CD8-positive, alpha-beta memory T cell (primary cell): ENCODE measurements at regions of chr7 and their contacts with region 1.

Region 1: DNA sequence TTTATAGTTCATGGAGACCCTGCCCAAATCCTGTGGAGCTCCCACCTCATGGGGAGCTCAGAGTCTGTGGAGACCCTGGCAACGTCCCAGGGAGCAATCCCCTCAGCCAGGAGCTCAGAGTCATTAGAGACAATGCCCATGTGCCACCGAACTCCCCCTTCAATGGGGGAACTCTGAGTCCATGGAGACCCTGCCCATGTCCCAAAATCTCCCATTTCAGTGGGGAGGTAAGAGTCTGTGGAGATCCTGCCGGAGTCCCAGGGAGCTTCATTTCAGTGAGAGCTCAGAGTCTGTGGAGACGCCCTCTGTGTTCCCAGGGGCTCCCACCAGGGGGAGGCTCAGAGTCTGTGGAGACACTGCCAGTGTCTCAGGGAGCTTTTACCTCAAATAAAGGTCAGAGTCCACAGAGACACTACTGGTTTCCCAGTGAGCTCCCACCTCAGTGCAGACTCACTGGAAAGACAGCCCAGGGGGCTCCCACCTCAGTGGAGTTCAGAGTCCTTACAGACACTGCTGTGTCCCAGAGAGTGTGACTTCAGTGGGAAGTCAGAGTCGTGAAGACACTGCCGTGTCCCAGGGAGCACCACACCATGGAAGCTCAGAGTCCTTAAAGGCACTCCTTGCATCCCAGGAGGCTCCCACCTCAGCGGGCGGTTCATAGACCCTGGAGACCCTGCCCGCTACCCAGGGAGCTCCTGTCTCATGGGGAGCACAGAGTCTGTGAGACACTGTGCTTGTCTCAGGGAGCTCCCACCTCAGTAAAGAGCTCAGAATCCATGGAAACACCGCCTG is 5.0 kb downstream of the MYO1G start:
- DNase-seq: peak; percentile 40 to 76 (median 41)
- H3K4me3 ChIP-seq: no peak overlapping the region
- H3K4me3 Mint-ChIP-seq: peak overlapping the region in 2 of 7 donors; percentile 50 to 56
- H3K27ac ChIP-seq: peak overlapping the region; percentile 1
- H3K27ac Mint-ChIP-seq: peak overlapping the region; percentile 29 to 96 (median 63)
- H3K4me1 ChIP-seq: peaks cover 54% of the 10 kb centered on the region
- H3K4me1 Mint-ChIP-seq: peaks cover 28 to 64% (median 30%) of the 10 kb centered on the region in 3 donors
- H3K27me3 ChIP-seq: no peaks in the 10 kb centered on the region
- H3K27me3 Mint-ChIP-seq: no peaks in the 10 kb centered on the region

Region 2: DNA sequence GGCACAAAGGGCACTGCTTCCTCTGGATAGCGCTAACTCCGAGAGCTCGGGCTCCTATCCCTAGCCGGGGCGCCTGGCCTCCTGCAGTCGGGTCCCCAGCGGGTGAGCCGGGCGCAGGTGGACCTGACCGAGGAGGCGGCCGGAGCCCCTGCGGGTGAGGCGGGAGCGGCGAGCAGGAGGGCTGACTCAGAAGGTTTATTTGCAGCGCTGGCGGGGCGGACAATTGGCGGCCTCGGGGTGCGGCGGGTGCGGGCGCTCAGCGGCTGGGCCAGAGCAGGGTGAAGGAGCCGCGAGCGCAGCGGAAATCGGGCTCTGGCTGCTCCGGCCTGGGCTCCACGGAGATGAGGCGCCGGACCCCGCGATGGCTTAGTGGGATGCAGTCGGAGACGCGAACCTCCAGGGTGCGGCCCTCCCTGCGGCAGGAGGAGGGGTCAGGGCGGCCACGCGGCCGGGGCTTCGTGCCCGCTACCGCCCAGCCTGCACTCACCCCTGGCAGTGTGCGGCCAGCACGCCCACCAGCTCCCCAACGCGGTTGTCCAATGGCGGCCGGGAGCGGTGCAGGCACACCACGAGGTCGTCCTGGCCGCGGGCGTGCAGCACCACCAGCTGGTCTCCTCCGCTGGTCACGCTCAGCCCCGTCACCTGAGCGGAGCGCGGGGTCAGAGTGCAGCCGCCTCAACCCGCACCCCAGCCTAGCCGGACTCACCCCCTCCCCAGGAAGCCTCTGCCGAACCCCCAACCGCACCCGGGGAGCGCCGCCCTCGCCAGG is 11.1 kb before region 1 on chr7:
- CTCF ChIA-PET with region 1: interaction called, 18 read pairs
- POLR2A ChIA-PET with region 1: interaction called, 5 read pairs
- DNase-seq: no peak
- H3K4me3 ChIP-seq: no peak overlapping the region
- H3K4me3 Mint-ChIP-seq: no peak overlapping the region
- H3K27ac ChIP-seq: no peak overlapping the region
- H3K27ac Mint-ChIP-seq: no peak overlapping the region
- H3K4me1 ChIP-seq: peaks cover 11% of the 10 kb centered on the region
- H3K4me1 Mint-ChIP-seq: peaks cover 14 to 25% (median 20%) of the 10 kb centered on the region in 3 donors
- H3K27me3 ChIP-seq: no peaks in the 10 kb centered on the region
- H3K27me3 Mint-ChIP-seq: peaks cover 0 to 2% of the 10 kb centered on the region in 2 donors

Region 3: DNA sequence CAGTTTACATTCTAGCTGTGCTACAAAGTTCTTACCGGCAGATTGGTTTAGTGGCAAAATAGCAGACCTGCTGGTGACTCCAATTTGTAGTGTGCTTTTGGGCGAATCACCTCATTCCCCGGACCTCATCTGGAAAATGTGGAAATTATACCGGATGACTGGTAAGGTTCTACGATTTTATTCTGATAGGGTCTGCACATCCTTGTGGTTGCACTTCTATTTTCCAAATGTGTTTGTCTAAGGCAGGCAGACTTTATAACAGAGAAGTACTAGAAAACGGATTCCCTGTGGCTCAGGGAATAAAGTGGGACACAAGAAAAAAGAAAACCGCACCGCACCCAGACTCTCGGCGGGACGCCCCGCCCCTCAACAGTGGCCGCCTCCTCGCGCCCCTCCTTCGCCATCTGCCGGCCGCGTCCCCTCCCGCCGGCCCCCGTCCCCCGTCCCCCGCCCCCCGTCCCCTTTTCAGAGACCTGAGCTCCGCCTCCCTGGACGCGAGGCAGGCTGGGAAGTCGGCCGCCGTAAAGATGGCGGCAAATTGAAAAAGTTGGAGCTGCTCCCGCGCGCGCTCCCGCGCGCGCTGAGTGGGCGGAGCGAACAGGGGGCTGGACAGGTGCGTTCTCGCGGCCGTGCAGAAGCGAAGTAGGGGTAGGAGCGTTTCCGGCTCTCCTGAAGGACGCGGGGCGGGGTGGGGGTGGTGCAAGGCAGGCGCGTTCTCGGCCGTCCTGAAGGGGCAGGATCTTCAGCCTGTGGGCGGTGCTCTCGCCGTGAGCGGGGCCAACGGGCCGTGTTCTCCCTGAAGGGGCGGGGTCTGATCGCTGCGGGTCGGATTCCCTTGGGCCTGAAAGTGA is 25.7 kb after region 1 on chr7:
- CTCF ChIA-PET with region 1: interaction called, 117 read pairs
- POLR2A ChIA-PET with region 1: interaction called, 14 read pairs
- DNase-seq: peak; percentile 98 to 100 (median 99)
- H3K4me3 ChIP-seq: peak overlapping the region; percentile 67
- H3K4me3 Mint-ChIP-seq: peak overlapping the region; percentile 97 to 99 (median 99)
- H3K27ac ChIP-seq: peak overlapping the region; percentile 75
- H3K27ac Mint-ChIP-seq: peak overlapping the region; percentile 93 to 97 (median 96)
- H3K4me1 ChIP-seq: peaks cover 55% of the 10 kb centered on the region
- H3K4me1 Mint-ChIP-seq: peaks cover 46 to 61% (median 54%) of the 10 kb centered on the region in 3 donors
- H3K27me3 ChIP-seq: no peaks in the 10 kb centered on the region
- H3K27me3 Mint-ChIP-seq: no peaks in the 10 kb centered on the region

Region 4: DNA sequence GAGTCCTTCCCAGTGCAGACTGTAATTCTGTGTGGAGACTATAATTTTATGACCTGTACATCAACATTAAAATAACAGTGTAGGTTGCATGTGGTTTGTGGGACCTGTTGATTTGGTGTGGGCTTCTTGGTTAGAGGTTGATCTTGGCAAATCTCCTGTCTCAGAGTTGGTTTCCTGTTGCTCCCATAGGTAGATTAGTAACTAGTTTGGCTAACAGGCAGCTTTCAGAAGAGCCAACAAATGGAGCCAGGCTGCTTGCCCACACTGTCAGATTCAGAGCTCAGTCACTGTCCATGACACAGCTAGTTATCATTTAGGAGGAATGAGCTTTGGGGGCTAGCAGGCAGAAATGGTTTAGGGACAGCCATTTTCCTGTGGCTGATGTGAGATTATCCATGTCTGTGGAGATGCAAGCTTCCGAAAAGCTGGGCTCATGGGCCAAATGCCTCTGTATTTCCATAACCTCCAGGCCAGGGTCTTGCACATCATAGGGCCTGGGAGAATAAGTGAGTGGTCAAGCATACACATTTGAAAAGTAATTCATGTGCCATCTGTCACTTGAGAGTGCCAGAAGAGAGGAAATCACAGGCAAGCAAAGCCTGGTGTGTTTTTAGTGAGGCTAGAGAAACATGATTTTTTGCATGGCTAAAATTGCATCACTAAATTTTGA is 59.6 kb after region 1 on chr7:
- CTCF ChIA-PET with region 1: interaction called, 51 read pairs
- POLR2A ChIA-PET with region 1: interaction called, 6 read pairs
- DNase-seq: peak in 2 of 5 donors; percentile 24 to 33
- H3K4me3 ChIP-seq: peak overlapping the region; percentile 48
- H3K4me3 Mint-ChIP-seq: peak overlapping the region; percentile 68 to 92 (median 80)
- H3K27ac ChIP-seq: peak overlapping the region; percentile 4
- H3K27ac Mint-ChIP-seq: peak overlapping the region; percentile 71 to 94 (median 84)
- H3K4me1 ChIP-seq: peaks cover 84% of the 10 kb centered on the region
- H3K4me1 Mint-ChIP-seq: peaks cover 73 to 88% (median 82%) of the 10 kb centered on the region in 3 donors
- H3K27me3 ChIP-seq: no peaks in the 10 kb centered on the region
- H3K27me3 Mint-ChIP-seq: no peaks in the 10 kb centered on the region

Region 5: DNA sequence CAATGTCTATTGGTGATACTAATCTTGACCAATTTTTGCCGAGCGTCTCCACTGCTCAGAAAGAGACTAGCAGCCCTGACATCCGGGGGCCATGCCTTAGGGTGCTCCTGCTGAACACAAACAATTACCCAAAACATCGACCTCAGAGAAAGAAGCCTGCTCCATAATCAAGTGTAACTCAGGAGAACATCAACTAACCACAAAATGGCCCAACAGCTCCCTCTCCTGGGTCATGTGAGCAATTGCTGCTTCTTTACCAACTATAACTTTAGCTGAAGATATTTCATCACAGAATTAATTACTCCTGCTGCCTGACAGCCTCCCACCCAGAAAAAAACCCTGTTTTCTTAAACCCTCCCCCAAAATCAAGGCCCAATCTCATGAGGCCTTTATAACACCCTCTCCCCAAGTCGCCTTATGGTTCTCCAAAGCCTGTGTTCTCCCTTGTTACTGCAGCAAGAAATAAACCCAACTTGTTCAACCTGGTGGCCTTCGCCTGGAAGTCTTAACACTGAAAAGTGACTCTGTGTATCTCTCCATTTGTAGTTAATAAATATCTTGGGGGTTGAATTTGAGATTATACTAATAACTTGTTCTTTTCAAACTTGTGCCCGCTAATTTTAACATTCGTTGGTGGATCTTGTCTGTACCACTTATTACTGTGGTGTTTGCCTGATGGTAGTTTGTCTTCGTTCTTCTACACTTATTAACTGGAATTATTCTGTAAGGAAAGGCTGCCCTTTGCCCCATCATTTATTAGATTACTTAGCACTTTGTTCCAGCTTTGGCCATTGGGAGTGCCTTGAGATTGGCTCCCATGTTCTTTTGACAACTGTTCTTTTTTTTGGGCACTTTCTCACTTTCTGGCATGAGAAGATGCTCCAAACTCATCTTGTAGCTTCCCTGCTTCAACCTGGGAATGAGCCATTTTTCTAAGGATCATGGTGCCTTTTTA is 162.6 kb after region 1 on chr7:
- CTCF ChIA-PET with region 1: interaction called, 88 read pairs
- POLR2A ChIA-PET with region 1: no interaction called
- DNase-seq: peak; percentile 35 to 74 (median 59)
- H3K4me3 ChIP-seq: no peak overlapping the region
- H3K4me3 Mint-ChIP-seq: peak overlapping the region in 1 of 7 donors; percentile 17
- H3K27ac ChIP-seq: no peak overlapping the region
- H3K27ac Mint-ChIP-seq: peak overlapping the region in 5 of 8 donors; percentile 13 to 70 (median 33)
- H3K4me1 ChIP-seq: peaks cover 6% of the 10 kb centered on the region
- H3K4me1 Mint-ChIP-seq: peaks cover 3 to 9% (median 4%) of the 10 kb centered on the region in 3 donors
- H3K27me3 ChIP-seq: no peaks in the 10 kb centered on the region
- H3K27me3 Mint-ChIP-seq: no peaks in the 10 kb centered on the region